ENCODE measurements at regions of chr2 and their contacts with region 1.

Region 1: GRCh38 chr2:240426797-240427721 is 8.4 kb upstream of the GPC1 start:
- DNase-seq: peak in 3 of 7 donors; percentile 10 to 40 (median 18)
- H3K4me3 ChIP-seq: no peak overlapping the region
- H3K27ac ChIP-seq: no peak overlapping the region
- H3K4me1 ChIP-seq: no peaks in the 10 kb centered on the region
- H3K27me3 ChIP-seq: no peaks in the 10 kb centered on the region
- CTCF ChIP-seq: no peak
- POLR2A ChIP-seq: no peak

Region 2: DNA sequence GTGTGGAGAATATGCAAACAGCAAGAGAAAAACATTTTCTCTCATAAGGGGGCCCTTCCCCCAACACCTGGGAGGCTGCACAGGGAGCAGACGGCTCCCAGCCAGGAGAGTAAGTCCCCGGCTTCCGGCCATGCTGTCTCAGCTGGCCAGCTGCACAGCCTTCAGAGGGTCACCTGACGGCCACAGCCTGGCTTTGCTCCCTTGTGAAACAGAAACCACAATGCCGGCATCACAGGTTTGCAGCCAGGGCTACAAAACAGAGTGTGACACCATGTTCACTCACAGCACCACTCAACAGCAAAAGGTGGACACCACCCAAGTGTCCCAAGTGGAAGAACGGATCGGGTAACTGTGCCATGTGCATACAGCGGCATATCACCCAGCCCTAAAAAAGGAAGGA is 78.5 kb before region 1 on chr2:
- intact Hi-C with region 1: loop called in 1 of 2 experiments (anchors 5 kb)
- DNase-seq: peak in 1 of 7 donors; percentile 20
- H3K4me3 ChIP-seq: no peak overlapping the region
- H3K27ac ChIP-seq: no peak overlapping the region
- H3K4me1 ChIP-seq: no peaks in the 10 kb centered on the region
- H3K27me3 ChIP-seq: no peaks in the 10 kb centered on the region
- CTCF ChIP-seq: no peak
- POLR2A ChIP-seq: no peak